A549 (cell line): ENCODE measurements at regions of chr2 and their contacts with region 1.

Region 1: DNA sequence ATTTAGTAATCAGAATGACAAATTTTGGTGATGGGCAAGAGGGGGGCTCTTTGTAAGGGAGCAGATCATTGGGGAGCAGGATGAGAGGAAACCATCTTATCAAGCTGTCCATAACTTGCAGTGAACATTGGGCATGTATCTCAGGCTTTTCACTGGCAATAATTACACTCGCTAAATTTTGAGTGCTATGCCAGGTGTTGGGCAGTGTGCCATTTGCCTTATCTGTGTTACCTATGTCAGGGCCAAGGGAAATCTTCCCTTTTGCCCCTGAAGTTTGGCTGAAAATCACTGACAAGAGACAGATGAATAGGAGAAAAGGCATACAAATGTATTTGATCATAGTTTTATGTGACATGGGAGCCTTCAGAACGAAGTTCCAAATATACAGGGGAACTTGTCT is 39.0 kb downstream of the NOSTRIN start:
- DNase-seq: no peak
- ATAC-seq: no peak
- H3K4me3 ChIP-seq: no peak overlapping the region
- H3K27ac ChIP-seq: no peak overlapping the region
- H3K4me1 ChIP-seq: no peaks in the 10 kb centered on the region
- CTCF ChIP-seq: no peak
- EP300 ChIP-seq: no peak
- POLR2A ChIP-seq: no peak
- RAD21 ChIP-seq: no peak

Region 2: GRCh38 chr2:168722592-168722991 is 118.9 kb before region 1 on chr2:
- CTCF ChIA-PET with region 1: no interaction called
- POLR2A ChIA-PET with region 1: interaction called, 10 read pairs
- DNase-seq: no peak
- ATAC-seq: no peak
- H3K4me3 ChIP-seq: no peak overlapping the region
- H3K27ac ChIP-seq: no peak overlapping the region
- H3K4me1 ChIP-seq: no peaks in the 10 kb centered on the region
- CTCF ChIP-seq: no peak
- EP300 ChIP-seq: no peak
- POLR2A ChIP-seq: no peak
- RAD21 ChIP-seq: no peak

Region 3: GRCh38 chr2:168853471-168853870 is 12.0 kb after region 1 on chr2:
- CTCF ChIA-PET with region 1: no interaction called
- POLR2A ChIA-PET with region 1: no interaction called
- DNase-seq: no peak
- ATAC-seq: no peak
- H3K4me3 ChIP-seq: no peak overlapping the region
- H3K27ac ChIP-seq: no peak overlapping the region
- H3K4me1 ChIP-seq: peaks cover 12% of the 10 kb centered on the region; the same call in 1 of the 3 replicates
- CTCF ChIP-seq: no peak
- EP300 ChIP-seq: no peak
- POLR2A ChIP-seq: no peak
- RAD21 ChIP-seq: no peak